GM13977 (cell line): ENCODE measurements at regions of chr5 and their contacts with region 1.

Region 1: DNA sequence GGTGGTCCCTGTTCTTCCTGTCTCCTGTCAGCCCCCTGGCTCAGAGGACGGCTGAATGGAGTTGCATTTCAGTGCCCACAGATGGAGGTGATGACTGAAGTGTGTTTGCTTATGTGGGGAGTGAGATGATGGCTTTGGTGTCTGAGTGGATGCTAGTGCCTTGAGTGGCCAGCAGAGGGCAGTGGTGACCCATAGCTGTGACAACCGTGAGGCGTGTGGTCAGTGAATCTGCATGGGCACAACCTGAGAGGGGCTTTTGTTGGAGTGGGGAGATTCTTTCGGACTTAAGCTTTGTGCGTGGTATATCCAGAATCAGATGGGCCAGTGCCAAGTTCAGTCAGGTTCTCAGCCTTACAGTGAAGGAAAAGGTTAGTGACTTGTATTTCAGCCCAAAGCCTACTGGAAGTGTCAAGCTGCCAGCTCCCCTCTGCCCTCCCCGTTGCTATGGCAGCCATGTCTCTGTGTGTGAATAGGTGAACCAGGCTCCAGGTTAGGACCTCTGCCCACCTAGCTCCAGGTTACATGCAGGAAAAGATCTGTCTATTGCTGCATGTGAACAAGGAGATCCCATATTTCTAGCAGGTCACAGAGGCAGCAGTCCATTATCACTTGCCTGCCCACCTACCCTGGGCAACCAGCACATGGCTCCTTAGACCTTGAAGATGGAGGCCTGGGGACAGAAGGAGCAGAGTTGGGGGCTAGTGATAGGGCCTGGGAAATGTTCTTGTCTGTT is 14.7 kb upstream of the CXXC5 start:
- DNase-seq: peak; percentile 76
- CTCF ChIP-seq: peak; percentile 97

Region 2: DNA sequence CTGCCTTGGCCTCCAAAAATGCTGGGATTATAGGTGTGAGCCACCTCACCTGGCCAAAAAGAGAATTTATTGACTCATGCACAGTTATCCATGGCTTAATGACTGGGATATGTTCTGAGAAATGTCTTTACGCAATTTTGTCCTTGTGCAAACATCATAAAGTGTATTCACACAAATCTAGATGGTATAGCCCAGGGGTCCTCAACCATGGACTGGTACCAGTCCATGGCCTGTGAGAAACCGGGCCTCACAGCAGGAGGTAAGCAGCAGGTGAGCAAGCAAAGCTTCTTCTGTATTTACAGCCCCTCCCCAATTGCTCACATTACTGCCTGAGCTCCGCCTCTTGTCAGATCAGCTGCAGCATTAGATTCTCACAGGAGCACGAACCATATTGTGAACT is 422.9 kb before region 1 on chr5:
- in situ Hi-C with region 1: no loop called
- DNase-seq: no peak
- CTCF ChIP-seq: no peak

Region 3: DNA sequence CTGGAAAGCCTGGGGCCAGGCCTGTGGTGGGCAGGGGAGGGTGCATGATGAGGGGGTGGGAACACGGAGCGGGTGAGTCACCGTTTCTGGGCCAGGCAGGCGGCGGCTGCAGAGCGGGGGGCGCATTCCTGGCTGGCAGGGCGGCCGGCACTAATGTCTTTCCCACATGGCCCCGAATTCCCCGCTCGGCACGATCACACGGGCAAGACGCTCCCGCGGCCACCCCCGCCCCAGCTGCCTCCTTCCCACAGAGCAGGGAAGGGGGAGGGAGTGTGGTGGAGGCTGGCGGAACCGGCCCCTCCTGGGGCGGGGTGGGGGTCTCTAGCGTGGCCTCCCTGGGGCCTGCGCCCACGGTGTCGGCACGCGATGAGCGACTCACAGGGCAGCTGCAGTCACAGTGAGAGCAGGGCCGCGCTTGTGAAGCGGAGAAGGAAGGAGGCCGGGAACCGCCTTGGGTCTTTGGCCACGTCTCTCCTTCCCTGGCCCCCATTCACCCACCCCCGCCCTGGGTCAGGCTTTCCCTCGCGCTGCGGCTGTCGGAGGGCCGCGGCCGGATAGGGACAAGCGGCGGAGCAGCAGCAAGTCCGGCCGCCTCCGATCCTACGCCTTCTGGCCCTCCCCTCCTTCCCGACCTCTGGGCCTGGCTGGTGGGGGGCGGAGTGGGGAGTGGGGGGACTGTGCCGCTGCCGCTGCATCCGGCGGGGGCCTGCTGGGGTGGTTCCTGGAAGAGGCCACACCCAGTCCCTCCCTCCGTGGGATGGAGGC is 63.6 kb after region 1 on chr5:
- in situ Hi-C with region 1: loop called (anchors 10 kb)
- DNase-seq: peak; percentile 64
- CTCF ChIP-seq: no peak

Region 4: DNA sequence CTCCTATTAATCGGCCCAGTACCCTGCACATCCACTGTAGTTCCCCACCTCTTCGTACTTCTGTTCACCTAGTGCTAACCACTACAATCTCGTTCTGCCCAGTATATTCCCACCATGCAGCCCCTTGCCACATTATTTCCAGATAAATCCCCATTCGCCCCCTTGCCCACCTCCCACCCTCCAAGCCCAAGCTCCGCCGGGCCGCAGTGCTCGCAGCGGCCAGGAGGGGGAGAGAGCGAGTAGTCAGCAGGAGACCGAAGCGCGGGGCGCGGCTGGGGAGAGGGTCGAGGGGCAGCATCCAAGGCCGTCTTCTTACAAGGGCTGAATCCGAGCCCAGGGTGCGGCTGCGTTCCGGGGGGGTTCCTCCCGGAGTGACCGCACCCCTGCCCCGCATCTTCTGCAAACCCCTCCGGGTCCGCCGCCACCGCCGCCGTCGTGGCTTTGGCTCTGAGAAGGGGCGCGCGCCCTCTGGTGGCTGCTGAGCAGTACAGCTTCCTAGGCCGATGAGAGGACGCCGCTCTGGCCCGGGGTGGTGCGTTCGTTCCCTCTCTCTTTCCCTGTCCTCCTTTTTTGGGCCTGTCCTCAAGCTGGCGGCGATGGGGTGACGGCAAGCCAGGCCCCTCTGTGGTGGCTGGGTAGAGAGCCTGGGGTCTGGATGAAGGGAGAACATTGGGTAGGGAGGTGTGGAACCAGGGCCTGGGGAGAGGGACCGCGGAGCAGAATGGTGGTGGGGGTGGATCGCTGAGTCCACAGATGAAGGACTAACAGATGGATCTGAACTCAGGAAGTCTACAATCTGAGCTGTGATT is 132.2 kb after region 1 on chr5:
- in situ Hi-C with region 1: loop called (anchors 10 kb)
- DNase-seq: peak; percentile 90
- CTCF ChIP-seq: peak; percentile 93